CD8-positive, alpha-beta T cell (primary cell): ENCODE measurements at regions of chr14 and their contacts with region 1.

Region 1: GRCh38 chr14:45095143-45095542 is 11.2 kb downstream of the PRPF39 start:
- DNase-seq: no peak
- ATAC-seq: no peak
- H3K4me3 ChIP-seq: no peak overlapping the region
- H3K4me3 Mint-ChIP-seq: no peak overlapping the region
- H3K27ac ChIP-seq: no peak overlapping the region
- H3K27ac Mint-ChIP-seq: no peak overlapping the region
- H3K4me1 ChIP-seq: no peaks in the 10 kb centered on the region
- H3K4me1 Mint-ChIP-seq: peaks cover 30% of the 10 kb centered on the region
- H3K27me3 ChIP-seq: no peaks in the 10 kb centered on the region
- H3K27me3 Mint-ChIP-seq: no peaks in the 10 kb centered on the region
- CTCF ChIP-seq: no peak

Region 2: DNA sequence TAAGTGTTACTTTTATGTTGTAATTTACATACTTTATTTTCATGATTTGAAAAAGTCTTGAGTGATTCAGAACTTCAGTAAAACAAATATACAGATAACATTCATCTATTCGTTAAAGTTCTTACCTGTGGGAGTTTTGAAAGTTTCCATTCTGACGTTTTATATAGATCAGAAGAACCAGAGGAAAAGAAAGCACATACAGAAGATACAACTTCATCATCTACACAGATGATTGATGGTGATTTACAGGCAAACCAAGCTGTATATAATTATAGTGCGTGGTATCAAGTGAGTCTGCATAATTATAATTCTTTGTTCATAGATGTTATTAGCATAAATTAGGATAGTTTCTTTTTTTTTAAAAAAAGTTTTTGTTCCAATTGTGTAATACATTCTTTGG is 19.2 kb after region 1 on chr14:
- CTCF ChIA-PET with region 1: interaction called, 4 read pairs
- POLR2A ChIA-PET with region 1: no interaction called
- intact Hi-C with region 1: loop called in 1 of 2 experiments (anchors 2 kb)
- DNase-seq: no peak
- ATAC-seq: no peak
- H3K4me3 ChIP-seq: no peak overlapping the region
- H3K4me3 Mint-ChIP-seq: no peak overlapping the region
- H3K27ac ChIP-seq: no peak overlapping the region
- H3K27ac Mint-ChIP-seq: no peak overlapping the region
- H3K4me1 ChIP-seq: no peaks in the 10 kb centered on the region
- H3K4me1 Mint-ChIP-seq: peaks cover 8% of the 10 kb centered on the region
- H3K27me3 ChIP-seq: no peaks in the 10 kb centered on the region
- H3K27me3 Mint-ChIP-seq: no peaks in the 10 kb centered on the region
- CTCF ChIP-seq: no peak

Region 3: GRCh38 chr14:45177076-45177475 is 81.9 kb after region 1 on chr14:
- CTCF ChIA-PET with region 1: no interaction called
- POLR2A ChIA-PET with region 1: no interaction called
- intact Hi-C with region 1: no loop called
- DNase-seq: peak in 1 of 9 experiments; percentile 1
- ATAC-seq: no peak
- H3K4me3 ChIP-seq: no peak overlapping the region
- H3K4me3 Mint-ChIP-seq: no peak overlapping the region
- H3K27ac ChIP-seq: no peak overlapping the region
- H3K27ac Mint-ChIP-seq: no peak overlapping the region
- H3K4me1 ChIP-seq: no peaks in the 10 kb centered on the region
- H3K4me1 Mint-ChIP-seq: no peaks in the 10 kb centered on the region
- H3K27me3 ChIP-seq: no peaks in the 10 kb centered on the region
- H3K27me3 Mint-ChIP-seq: no peaks in the 10 kb centered on the region
- CTCF ChIP-seq: no peak